PC-3 (cell line): ENCODE measurements at regions of chr3 and their contacts with region 1.

Region 1: GRCh38 chr3:86774082-86774691 is 216.8 kb downstream of the VGLL3 start:
- DNase-seq: peak; percentile 74
- ATAC-seq: peak; percentile 49; the same call in 1 of the 2 replicates
- H3K4me3 ChIP-seq: no peak overlapping the region
- H3K27ac ChIP-seq: no peak overlapping the region
- H3K4me1 ChIP-seq: no peaks in the 10 kb centered on the region
- H3K27me3 ChIP-seq: no peaks in the 10 kb centered on the region
- CTCF ChIP-seq: peak; percentile 79

Region 2: DNA sequence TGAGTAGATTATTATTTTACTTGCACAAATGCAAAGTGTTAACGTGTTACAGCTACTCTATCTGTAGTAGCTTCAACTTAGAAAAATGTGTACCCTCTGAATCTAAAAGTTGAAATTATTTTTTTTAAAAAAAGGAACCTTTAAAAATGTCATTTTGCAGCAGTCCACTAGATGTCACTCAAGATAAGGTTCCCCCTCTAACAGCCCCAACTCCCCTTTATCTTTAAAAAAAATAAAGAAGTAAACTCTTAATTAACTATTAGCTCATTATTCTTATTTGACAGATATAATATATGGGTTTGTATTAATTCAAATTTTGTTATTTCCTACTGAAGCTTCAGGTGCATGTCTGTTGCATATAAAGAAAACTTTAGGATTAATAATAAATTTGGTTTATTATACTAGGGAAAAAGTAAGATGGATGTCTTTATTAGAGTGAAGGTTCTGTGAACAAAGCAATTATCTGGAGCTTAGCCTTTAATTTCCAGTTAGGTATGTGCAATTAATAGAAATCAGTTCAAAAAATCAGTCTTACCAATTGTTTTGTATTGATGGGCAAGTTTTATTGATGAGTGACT is 71.7 kb before region 1 on chr3:
- CTCF ChIA-PET with region 1: interaction called, 4 read pairs
- POLR2A ChIA-PET with region 1: no interaction called
- intact Hi-C with region 1: loop called (anchors 1 kb)
- DNase-seq: peak; percentile 33
- ATAC-seq: no peak; the same call in 1 of the 2 replicates
- H3K4me3 ChIP-seq: no peak overlapping the region
- H3K27ac ChIP-seq: no peak overlapping the region
- H3K4me1 ChIP-seq: no peaks in the 10 kb centered on the region
- H3K27me3 ChIP-seq: no peaks in the 10 kb centered on the region
- CTCF ChIP-seq: peak; percentile 73

Region 3: GRCh38 chr3:87503900-87504508 is 729.8 kb after region 1 on chr3:
- CTCF ChIA-PET with region 1: no interaction called
- POLR2A ChIA-PET with region 1: no interaction called
- intact Hi-C with region 1: loop called (anchors 5 kb)
- DNase-seq: peak; percentile 92
- ATAC-seq: peak; percentile 54
- H3K4me3 ChIP-seq: no peak overlapping the region
- H3K27ac ChIP-seq: no peak overlapping the region
- H3K4me1 ChIP-seq: peaks cover 34% of the 10 kb centered on the region
- H3K27me3 ChIP-seq: no peaks in the 10 kb centered on the region
- CTCF ChIP-seq: peak; percentile 96

Region 4: DNA sequence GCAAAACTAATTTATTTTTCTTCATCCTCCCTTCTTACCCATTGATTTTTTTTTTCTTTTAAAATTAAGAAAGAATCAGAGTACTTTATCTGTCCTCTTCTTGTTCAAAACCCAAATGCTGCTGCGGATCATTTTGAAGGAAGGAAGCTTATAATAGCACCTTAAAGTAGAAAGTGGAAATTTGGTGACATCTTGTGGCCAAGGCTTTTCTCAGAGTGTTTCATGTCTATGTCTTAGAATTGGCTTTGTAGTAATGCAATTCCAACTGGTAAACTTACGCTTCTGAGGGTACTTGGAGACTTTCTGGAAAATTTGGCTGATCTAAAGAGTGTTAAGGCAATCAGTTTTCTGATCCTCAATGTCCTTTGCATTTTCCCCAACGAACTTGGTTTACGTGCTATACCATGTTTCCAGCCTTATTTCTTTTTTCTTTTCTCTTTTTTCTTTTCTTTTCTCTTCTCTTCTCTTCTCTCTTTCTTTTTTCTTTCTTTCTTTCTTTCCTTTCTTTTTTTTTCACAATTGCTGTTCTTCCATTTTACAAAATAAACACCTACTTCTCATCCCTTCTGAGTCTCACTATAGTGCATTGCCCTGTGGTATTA is 1406.3 kb after region 1 on chr3:
- CTCF ChIA-PET with region 1: no interaction called
- POLR2A ChIA-PET with region 1: no interaction called
- intact Hi-C with region 1: loop called (anchors 5 kb)
- DNase-seq: peak; percentile 69
- ATAC-seq: peak; percentile 76
- H3K4me3 ChIP-seq: no peak overlapping the region
- H3K27ac ChIP-seq: no peak overlapping the region
- H3K4me1 ChIP-seq: no peaks in the 10 kb centered on the region
- H3K27me3 ChIP-seq: no peaks in the 10 kb centered on the region
- CTCF ChIP-seq: peak; percentile 71